ENCODE measurements at regions of chr14 and their contacts with region 1.

Region 1: GRCh38 chr14:31435276-31435675 is 14.9 kb upstream of the HEATR5A start:
- DNase-seq: no peak
- CTCF ChIP-seq: no peak

Region 2: GRCh38 chr14:31229638-31230229 is 205.5 kb before region 1 on chr14:
- CTCF ChIA-PET with region 1: no interaction called
- POLR2A ChIA-PET with region 1: no interaction called
- DNase-seq: no peak
- CTCF ChIP-seq: no peak

Region 3: GRCh38 chr14:31413276-31413675 is 22.0 kb before region 1 on chr14:
- CTCF ChIA-PET with region 1: no interaction called
- POLR2A ChIA-PET with region 1: no interaction called
- DNase-seq: no peak
- CTCF ChIP-seq: no peak

Region 4: GRCh38 chr14:31449971-31450610 is 14.8 kb after region 1 on chr14:
- CTCF ChIA-PET with region 1: interaction called, 10 read pairs
- POLR2A ChIA-PET with region 1: no interaction called
- DNase-seq: peak; percentile 33
- CTCF ChIP-seq: peak; percentile 50